ENCODE measurements at regions of chr9 and their contacts with region 1.

Region 1: DNA sequence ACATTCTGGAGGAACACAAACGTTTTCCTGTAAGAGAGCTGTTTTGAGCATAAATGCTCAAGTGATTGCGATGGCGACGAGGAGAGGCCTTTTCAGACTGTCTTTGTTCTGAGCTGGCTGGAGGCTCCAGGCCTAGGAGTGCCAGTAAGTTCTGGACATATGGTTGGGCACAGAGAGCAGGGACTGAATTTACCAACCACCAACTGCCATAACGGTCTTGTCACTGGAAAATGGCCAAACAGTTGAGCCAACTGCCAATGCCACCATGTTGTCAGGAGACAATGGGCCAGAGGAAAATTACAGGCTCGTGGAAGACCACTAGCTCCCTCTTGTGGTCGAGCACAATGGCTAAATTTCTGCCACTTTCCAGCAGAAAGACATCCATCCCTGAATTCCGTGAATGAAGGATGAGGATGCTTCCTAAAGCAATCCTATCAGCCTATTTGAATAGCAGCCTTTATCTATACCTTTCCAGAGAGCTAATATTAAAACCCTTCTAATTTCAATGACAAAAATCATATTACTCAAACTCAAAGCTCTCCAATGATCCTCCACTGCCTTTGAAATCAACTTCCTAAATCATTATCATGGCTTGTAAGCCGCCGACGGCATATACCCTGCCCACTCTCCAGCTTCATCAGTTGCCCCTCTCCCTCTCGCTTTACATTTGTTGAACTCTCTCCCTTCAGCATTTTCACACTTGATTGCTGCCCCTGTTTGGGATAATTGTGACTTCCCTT is 66.9 kb upstream of the GLIS3 start:
- DNase-seq: peak; percentile 53
- H3K4me3 ChIP-seq: no peak overlapping the region
- H3K27ac ChIP-seq: no peak overlapping the region
- H3K4me1 ChIP-seq: no peaks in the 10 kb centered on the region
- H3K27me3 ChIP-seq: peaks cover 2 to 5% of the 10 kb centered on the region in 2 experiments
- CTCF ChIP-seq: peak; percentile 74 to 81
- POLR2A ChIP-seq: no peak

Region 2: GRCh38 chr9:4228606-4229005 is 138.2 kb before region 1 on chr9:
- CTCF ChIA-PET with region 1: interaction called, 11 read pairs
- POLR2A ChIA-PET with region 1: no interaction called
- dilution Hi-C with region 1: no loop called
- intact Hi-C with region 1: no loop called
- DNase-seq: peak; percentile 25
- H3K4me3 ChIP-seq: no peak overlapping the region
- H3K27ac ChIP-seq: no peak overlapping the region
- H3K4me1 ChIP-seq: no peaks in the 10 kb centered on the region
- H3K27me3 ChIP-seq: peaks cover 0 to 2% of the 10 kb centered on the region in 2 experiments
- CTCF ChIP-seq: peak; percentile 11 to 42
- POLR2A ChIP-seq: no peak

Region 3: GRCh38 chr9:4356306-4356705 is 10.5 kb before region 1 on chr9:
- CTCF ChIA-PET with region 1: interaction called, 11 read pairs
- POLR2A ChIA-PET with region 1: no interaction called
- dilution Hi-C with region 1: no loop called
- intact Hi-C with region 1: no loop called
- DNase-seq: peak; percentile 88
- H3K4me3 ChIP-seq: no peak overlapping the region
- H3K27ac ChIP-seq: no peak overlapping the region
- H3K4me1 ChIP-seq: no peaks in the 10 kb centered on the region
- H3K27me3 ChIP-seq: peaks cover 0 to 13% of the 10 kb centered on the region in 2 experiments
- CTCF ChIP-seq: no peak
- POLR2A ChIP-seq: no peak